ENCODE measurements at regions of chr1 and their contacts with region 1.

Region 1: GRCh38 chr1:192808518-192809306 is at the start of gene RGS2:
- DNase-seq: peak; percentile 95
- ATAC-seq: peak; percentile 85
- H3K4me3 ChIP-seq: peak within 1 kb of the TSS; percentile 58 to 99 (median 90)
- H3K4me3 Mint-ChIP-seq: peak within 1 kb of the TSS; percentile 96
- H3K27ac ChIP-seq: peak within 1 kb of the TSS; percentile 65 to 76
- H3K27ac Mint-ChIP-seq: peak within 1 kb of the TSS; percentile 95
- H3K4me1 ChIP-seq: peaks cover 23 to 24% of the 10 kb centered on the region in 2 donors
- H3K4me1 Mint-ChIP-seq: peaks cover 46% of the 10 kb centered on the region
- H3K27me3 ChIP-seq: peaks cover 0 to 3% (median 0%) of the 10 kb centered on the region in 4 experiments
- H3K27me3 Mint-ChIP-seq: no peaks in the 10 kb centered on the region
- CTCF ChIP-seq: peak; percentile 15
- total RNA-seq, gene RGS2: 224 and 232 TPM in 2 replicates

Region 2: GRCh38 chr1:192327997-192328396 is 480.7 kb before region 1 on chr1:
- CTCF ChIA-PET with region 1: no interaction called
- POLR2A ChIA-PET with region 1: no interaction called
- intact Hi-C with region 1: no loop called
- DNase-seq: no peak
- ATAC-seq: no peak
- H3K4me3 ChIP-seq: no peak overlapping the region
- H3K4me3 Mint-ChIP-seq: no peak overlapping the region
- H3K27ac ChIP-seq: no peak overlapping the region
- H3K27ac Mint-ChIP-seq: no peak overlapping the region
- H3K4me1 ChIP-seq: no peaks in the 10 kb centered on the region
- H3K4me1 Mint-ChIP-seq: no peaks in the 10 kb centered on the region
- H3K27me3 ChIP-seq: no peaks in the 10 kb centered on the region
- H3K27me3 Mint-ChIP-seq: no peaks in the 10 kb centered on the region
- CTCF ChIP-seq: no peak

Region 3: GRCh38 chr1:192439373-192440025 is 369.2 kb before region 1 on chr1:
- CTCF ChIA-PET with region 1: no interaction called
- POLR2A ChIA-PET with region 1: no interaction called
- intact Hi-C with region 1: no loop called
- DNase-seq: no peak
- ATAC-seq: no peak
- H3K4me3 ChIP-seq: no peak overlapping the region
- H3K4me3 Mint-ChIP-seq: no peak overlapping the region
- H3K27ac ChIP-seq: no peak overlapping the region
- H3K27ac Mint-ChIP-seq: no peak overlapping the region
- H3K4me1 ChIP-seq: no peaks in the 10 kb centered on the region
- H3K4me1 Mint-ChIP-seq: no peaks in the 10 kb centered on the region
- H3K27me3 ChIP-seq: no peaks in the 10 kb centered on the region
- H3K27me3 Mint-ChIP-seq: peaks cover 6% of the 10 kb centered on the region
- CTCF ChIP-seq: no peak

Region 4: GRCh38 chr1:192539297-192540092 is 269.2 kb before region 1 on chr1:
- CTCF ChIA-PET with region 1: interaction called, 3 read pairs
- POLR2A ChIA-PET with region 1: no interaction called
- intact Hi-C with region 1: loop called (anchors 2 kb)
- DNase-seq: peak; percentile 25
- ATAC-seq: peak; percentile 16
- H3K4me3 ChIP-seq: no peak overlapping the region
- H3K4me3 Mint-ChIP-seq: peak overlapping the region; percentile 18
- H3K27ac ChIP-seq: peak overlapping the region in 1 of 2 donors; percentile 36
- H3K27ac Mint-ChIP-seq: peak overlapping the region; percentile 8
- H3K4me1 ChIP-seq: peaks cover 13 to 16% of the 10 kb centered on the region in 2 donors
- H3K4me1 Mint-ChIP-seq: peaks cover 35% of the 10 kb centered on the region
- H3K27me3 ChIP-seq: peaks cover 0 to 9% (median 0%) of the 10 kb centered on the region in 4 experiments
- H3K27me3 Mint-ChIP-seq: no peaks in the 10 kb centered on the region
- CTCF ChIP-seq: no peak

Region 5: DNA sequence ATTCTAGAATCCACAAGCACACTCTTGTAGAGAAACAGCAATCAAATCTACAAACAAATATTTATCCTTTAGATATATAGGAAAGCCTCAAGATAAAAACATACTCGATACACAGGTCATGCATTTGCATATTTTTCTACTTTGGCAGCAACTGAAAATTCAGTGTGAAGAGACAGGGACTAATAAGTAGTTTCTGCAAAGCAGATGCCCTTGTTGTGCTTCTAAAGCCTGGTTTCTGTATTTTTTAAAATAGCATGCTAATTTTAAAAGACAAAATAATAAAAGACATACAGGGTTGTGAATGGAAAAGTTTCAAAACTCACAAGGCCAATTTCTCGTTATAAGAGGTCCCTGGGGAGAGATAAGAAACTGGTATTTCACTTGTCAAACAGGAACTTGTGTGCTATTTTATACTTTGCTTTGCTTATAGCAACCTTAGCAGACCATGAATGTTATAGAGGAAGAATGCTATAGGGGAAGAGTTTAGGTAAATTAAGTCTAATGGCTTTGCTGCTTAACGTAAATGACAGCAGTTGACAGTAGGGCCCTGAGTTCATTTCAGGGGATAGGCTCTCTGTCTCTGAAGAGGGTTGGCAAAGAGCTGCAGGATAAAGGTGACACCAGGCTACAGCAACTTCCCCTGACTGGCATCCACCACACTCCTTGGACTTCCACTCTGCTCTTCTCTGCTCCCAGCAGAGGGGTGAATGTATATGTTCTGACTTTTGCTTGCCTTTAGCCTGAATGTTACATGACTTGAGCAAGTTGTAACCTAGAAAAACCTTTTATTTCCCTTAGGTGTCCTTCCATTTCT is 182.1 kb before region 1 on chr1:
- CTCF ChIA-PET with region 1: no interaction called
- POLR2A ChIA-PET with region 1: no interaction called
- intact Hi-C with region 1: loop called (anchors 5 kb)
- DNase-seq: peak; percentile 61
- ATAC-seq: peak; percentile 93
- H3K4me3 ChIP-seq: no peak overlapping the region
- H3K4me3 Mint-ChIP-seq: peak overlapping the region; percentile 30
- H3K27ac ChIP-seq: no peak overlapping the region
- H3K27ac Mint-ChIP-seq: no peak overlapping the region
- H3K4me1 ChIP-seq: peaks cover 11 to 16% of the 10 kb centered on the region in 2 donors
- H3K4me1 Mint-ChIP-seq: peaks cover 12% of the 10 kb centered on the region
- H3K27me3 ChIP-seq: peaks cover 5 to 57% (median 47%) of the 10 kb centered on the region in 4 experiments
- H3K27me3 Mint-ChIP-seq: peaks cover 77% of the 10 kb centered on the region
- CTCF ChIP-seq: no peak

Region 6: GRCh38 chr1:193025218-193025617 is 216.5 kb after region 1 on chr1:
- CTCF ChIA-PET with region 1: interaction called, 201 read pairs
- POLR2A ChIA-PET with region 1: no interaction called
- intact Hi-C with region 1: no loop called
- DNase-seq: no peak
- ATAC-seq: no peak
- H3K4me3 ChIP-seq: no peak overlapping the region
- H3K4me3 Mint-ChIP-seq: no peak overlapping the region
- H3K27ac ChIP-seq: no peak overlapping the region
- H3K27ac Mint-ChIP-seq: no peak overlapping the region
- H3K4me1 ChIP-seq: no peaks in the 10 kb centered on the region
- H3K4me1 Mint-ChIP-seq: no peaks in the 10 kb centered on the region
- H3K27me3 ChIP-seq: no peaks in the 10 kb centered on the region
- H3K27me3 Mint-ChIP-seq: no peaks in the 10 kb centered on the region
- CTCF ChIP-seq: no peak

Region 7: GRCh38 chr1:193121616-193122593 is 313.2 kb after region 1 on chr1 and contains the start of gene CDC73:
- CTCF ChIA-PET with region 1: interaction called, 32 read pairs
- POLR2A ChIA-PET with region 1: interaction called, 4 read pairs
- intact Hi-C with region 1: loop called (anchors 1 kb)
- DNase-seq: peak; percentile 99
- ATAC-seq: peak; percentile 89
- H3K4me3 ChIP-seq: peak within 1 kb of the TSS; percentile 87 to 99 (median 93)
- H3K4me3 Mint-ChIP-seq: peak within 1 kb of the TSS; percentile 90
- H3K27ac ChIP-seq: peak within 1 kb of the TSS; percentile 82 to 93
- H3K27ac Mint-ChIP-seq: peak within 1 kb of the TSS; percentile 93
- H3K4me1 ChIP-seq: peaks cover 20 to 21% of the 10 kb centered on the region in 2 donors
- H3K4me1 Mint-ChIP-seq: peaks cover 40% of the 10 kb centered on the region
- H3K27me3 ChIP-seq: no peaks in the 10 kb centered on the region
- H3K27me3 Mint-ChIP-seq: no peaks in the 10 kb centered on the region
- CTCF ChIP-seq: peak; percentile 92
- total RNA-seq, gene CDC73: 71.7 and 77.2 TPM in 2 replicates

Region 8: GRCh38 chr1:194295685-194296084 is 1487.0 kb after region 1 on chr1:
- CTCF ChIA-PET with region 1: no interaction called
- POLR2A ChIA-PET with region 1: no interaction called
- intact Hi-C with region 1: loop called (anchors 2 kb)
- DNase-seq: peak; percentile 77
- ATAC-seq: peak; percentile 93
- H3K4me3 ChIP-seq: no peak overlapping the region
- H3K4me3 Mint-ChIP-seq: no peak overlapping the region
- H3K27ac ChIP-seq: no peak overlapping the region
- H3K27ac Mint-ChIP-seq: no peak overlapping the region
- H3K4me1 ChIP-seq: no peaks in the 10 kb centered on the region
- H3K4me1 Mint-ChIP-seq: peaks cover 9% of the 10 kb centered on the region
- H3K27me3 ChIP-seq: peaks cover 0 to 9% (median 5%) of the 10 kb centered on the region in 4 experiments
- H3K27me3 Mint-ChIP-seq: peaks cover 21% of the 10 kb centered on the region
- CTCF ChIP-seq: peak; percentile 84